Mammary epithelial cell (primary cell): ENCODE measurements at regions of chr5 and their contacts with region 1.

Region 1: GRCh38 chr5:154654486-154655371 is 100.4 kb upstream of the LARP1 start:
- DNase-seq: no peak
- H3K4me3 ChIP-seq: no peak overlapping the region
- H3K27ac ChIP-seq: no peak overlapping the region
- H3K4me1 ChIP-seq: peaks cover 11% of the 10 kb centered on the region
- H3K27me3 ChIP-seq: no peaks in the 10 kb centered on the region
- CTCF ChIP-seq: no peak

Region 2: GRCh38 chr5:154686490-154686889 is 31.8 kb after region 1 on chr5:
- CTCF ChIA-PET with region 1: no interaction called
- dilution Hi-C with region 1: no loop called
- in situ Hi-C with region 1: no loop called
- intact Hi-C with region 1: no loop called
- DNase-seq: no peak
- H3K4me3 ChIP-seq: no peak overlapping the region
- H3K27ac ChIP-seq: no peak overlapping the region
- H3K4me1 ChIP-seq: peaks cover 12% of the 10 kb centered on the region
- H3K27me3 ChIP-seq: no peaks in the 10 kb centered on the region
- CTCF ChIP-seq: no peak

Region 3: DNA sequence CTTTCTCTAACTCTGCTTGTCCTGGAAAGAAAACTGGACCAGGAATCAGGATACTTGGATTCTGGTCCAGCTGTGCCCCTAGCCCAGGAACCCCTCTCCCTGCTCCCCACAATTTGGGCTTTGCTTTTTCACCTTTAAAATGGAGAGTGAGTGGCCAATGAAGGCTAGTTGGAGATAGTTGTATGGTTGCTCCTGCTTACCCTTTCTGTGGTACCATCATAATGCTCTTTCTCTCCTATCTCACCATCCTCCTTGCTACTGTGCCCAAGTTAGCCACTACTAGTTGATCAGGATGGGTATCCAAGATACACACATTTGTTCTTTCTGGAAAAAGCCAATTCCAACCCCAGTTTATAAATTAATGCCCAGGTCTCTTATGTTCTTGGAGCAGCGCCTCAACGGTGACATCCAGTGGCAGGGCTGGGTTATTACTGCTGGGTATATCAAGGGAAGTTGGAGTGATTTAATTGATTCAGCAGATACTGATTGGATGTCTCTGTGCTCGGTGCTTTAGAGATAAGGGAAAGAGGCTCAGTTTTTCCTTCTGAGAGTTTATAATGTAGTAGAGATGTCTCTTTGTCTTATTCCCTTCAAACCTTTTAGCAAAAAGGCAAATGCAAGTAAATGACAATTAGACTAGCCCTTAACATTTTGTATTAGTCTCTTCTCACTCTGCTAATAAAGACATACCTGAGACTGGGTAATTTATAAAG is 157.1 kb after region 1 on chr5:
- CTCF ChIA-PET with region 1: no interaction called
- dilution Hi-C with region 1: no loop called
- in situ Hi-C with region 1: loop called in 1 of 2 experiments (anchors 10 kb)
- intact Hi-C with region 1: loop called (anchors 1 kb)
- DNase-seq: peak; percentile 38
- H3K4me3 ChIP-seq: no peak overlapping the region
- H3K27ac ChIP-seq: no peak overlapping the region
- H3K4me1 ChIP-seq: no peaks in the 10 kb centered on the region
- H3K27me3 ChIP-seq: no peaks in the 10 kb centered on the region
- CTCF ChIP-seq: peak; percentile 85 to 98

Region 4: GRCh38 chr5:154901276-154901675 is 246.5 kb after region 1 on chr5:
- CTCF ChIA-PET with region 1: no interaction called
- dilution Hi-C with region 1: loop called (anchors 10 kb)
- in situ Hi-C with region 1: no loop called
- intact Hi-C with region 1: loop called (anchors 10 kb)
- DNase-seq: no peak
- H3K4me3 ChIP-seq: no peak overlapping the region
- H3K27ac ChIP-seq: no peak overlapping the region
- H3K4me1 ChIP-seq: no peaks in the 10 kb centered on the region
- H3K27me3 ChIP-seq: no peaks in the 10 kb centered on the region
- CTCF ChIP-seq: no peak